ENCODE measurements at regions of chr19 and their contacts with region 1.

Region 1: GRCh38 chr19:49877020-49877878 is at the starts of genes AKT1S1 and TBC1D17:
- DNase-seq: peak; percentile 99
- ATAC-seq: peak; percentile 75
- H3K4me3 Mint-ChIP-seq: no peak within 1 kb of the TSS
- H3K27ac Mint-ChIP-seq: no peak within 1 kb of the TSS
- H3K4me1 Mint-ChIP-seq: peaks cover 25% of the 10 kb centered on the region
- H3K27me3 Mint-ChIP-seq: no peaks in the 10 kb centered on the region
- total RNA-seq, gene AKT1S1: 16.1 to 20.3 TPM
- total RNA-seq, gene TBC1D17: 29.1 to 29.6 TPM

Region 2: DNA sequence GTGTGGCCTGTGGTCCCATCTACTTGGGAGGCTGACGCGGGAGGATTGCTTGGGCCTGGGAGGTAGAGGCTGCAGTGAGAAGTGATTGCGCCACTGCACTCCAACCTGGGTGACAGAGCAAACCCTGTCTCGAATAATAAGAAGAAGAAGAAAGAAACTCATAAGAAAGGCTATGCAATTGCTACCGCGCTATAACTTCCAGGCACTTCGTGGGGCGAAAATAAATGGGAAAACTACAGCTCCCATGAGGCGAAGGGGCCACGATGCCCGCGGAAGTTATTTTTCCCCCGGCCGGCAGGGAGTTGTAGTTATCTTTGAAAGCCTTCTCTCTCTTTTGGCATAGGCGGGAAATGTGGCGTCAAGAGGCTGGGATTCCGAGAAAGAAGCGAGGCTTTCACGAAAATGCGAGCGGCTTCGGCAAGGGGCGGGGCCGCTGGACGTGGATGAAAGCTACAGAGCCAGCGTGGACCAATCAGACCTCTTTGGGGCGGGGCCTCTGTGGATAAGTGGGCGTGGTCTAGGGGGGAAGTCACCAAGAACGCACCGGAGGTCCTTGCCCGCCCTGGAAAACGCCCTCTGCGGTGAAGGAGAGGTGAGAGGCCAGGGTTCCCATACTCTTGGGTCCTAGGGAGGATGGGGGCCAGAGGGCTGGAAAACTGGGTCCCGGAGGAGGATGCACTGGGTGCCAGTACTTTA is 977.3 kb before region 1 on chr19 and contains the start of gene NUCB1:
- CTCF ChIA-PET with region 1: no interaction called
- POLR2A ChIA-PET with region 1: no interaction called
- intact Hi-C with region 1: loop called in 1 of 2 experiments (anchors 5 kb)
- DNase-seq: peak; percentile 100
- ATAC-seq: peak; percentile 95
- H3K4me3 Mint-ChIP-seq: peak within 1 kb of the TSS; percentile 99
- H3K27ac Mint-ChIP-seq: peak within 1 kb of the TSS; percentile 98
- H3K4me1 Mint-ChIP-seq: peaks cover 34% of the 10 kb centered on the region
- H3K27me3 Mint-ChIP-seq: peaks cover 5% of the 10 kb centered on the region
- total RNA-seq, gene NUCB1: 115 to 118 TPM

Region 3: GRCh38 chr19:49590071-49590970 is 286.9 kb before region 1 on chr19:
- CTCF ChIA-PET with region 1: no interaction called
- POLR2A ChIA-PET with region 1: no interaction called
- intact Hi-C with region 1: loop called in 1 of 2 experiments (anchors 1 kb)
- DNase-seq: peak; percentile 98
- ATAC-seq: peak; percentile 80
- H3K4me3 Mint-ChIP-seq: peak overlapping the region; percentile 79
- H3K27ac Mint-ChIP-seq: peak overlapping the region; percentile 84
- H3K4me1 Mint-ChIP-seq: peaks cover 28% of the 10 kb centered on the region
- H3K27me3 Mint-ChIP-seq: no peaks in the 10 kb centered on the region

Region 4: DNA sequence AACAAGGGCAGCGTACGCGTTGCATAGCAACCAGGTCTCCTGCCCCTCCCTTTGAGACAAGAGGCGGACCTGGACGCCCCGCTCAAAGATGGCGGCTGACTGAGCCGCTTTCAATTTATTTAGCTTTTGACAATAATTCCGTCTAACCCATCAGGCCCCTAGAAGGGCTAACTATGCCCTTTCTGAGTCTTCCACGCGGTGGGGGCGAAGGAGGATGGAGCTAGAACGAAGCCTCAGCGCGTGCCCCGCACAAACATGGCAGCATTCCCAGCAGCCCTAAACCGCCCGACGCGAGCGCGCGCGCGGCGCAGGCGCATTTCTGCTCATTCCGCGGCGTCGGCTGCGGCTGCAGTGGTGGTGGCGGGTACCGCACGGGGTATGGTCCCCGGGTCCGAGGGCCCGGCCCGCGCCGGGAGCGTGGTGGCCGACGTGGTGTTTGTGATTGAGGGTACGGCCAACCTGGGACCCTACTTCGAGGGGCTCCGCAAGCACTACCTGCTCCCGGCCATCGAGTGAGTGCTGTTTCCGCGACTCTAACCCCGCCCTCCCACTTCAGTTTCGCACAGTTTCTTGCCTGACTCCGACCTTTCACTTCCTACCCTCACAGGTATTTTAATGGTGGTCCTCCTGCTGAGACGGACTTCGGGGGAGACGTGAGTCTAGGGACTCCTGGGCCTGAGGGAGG is 59.1 kb before region 1 on chr19 and contains the start of gene MED25:
- CTCF ChIA-PET with region 1: no interaction called
- POLR2A ChIA-PET with region 1: no interaction called
- intact Hi-C with region 1: loop called (anchors 1 to 2 kb)
- DNase-seq: peak; percentile 91
- ATAC-seq: peak; percentile 75
- H3K4me3 Mint-ChIP-seq: peak within 1 kb of the TSS; percentile 87
- H3K27ac Mint-ChIP-seq: peak within 1 kb of the TSS; percentile 99
- H3K4me1 Mint-ChIP-seq: peaks cover 26% of the 10 kb centered on the region
- H3K27me3 Mint-ChIP-seq: no peaks in the 10 kb centered on the region
- total RNA-seq, gene MED25: 39.6 to 49.9 TPM

Region 5: DNA sequence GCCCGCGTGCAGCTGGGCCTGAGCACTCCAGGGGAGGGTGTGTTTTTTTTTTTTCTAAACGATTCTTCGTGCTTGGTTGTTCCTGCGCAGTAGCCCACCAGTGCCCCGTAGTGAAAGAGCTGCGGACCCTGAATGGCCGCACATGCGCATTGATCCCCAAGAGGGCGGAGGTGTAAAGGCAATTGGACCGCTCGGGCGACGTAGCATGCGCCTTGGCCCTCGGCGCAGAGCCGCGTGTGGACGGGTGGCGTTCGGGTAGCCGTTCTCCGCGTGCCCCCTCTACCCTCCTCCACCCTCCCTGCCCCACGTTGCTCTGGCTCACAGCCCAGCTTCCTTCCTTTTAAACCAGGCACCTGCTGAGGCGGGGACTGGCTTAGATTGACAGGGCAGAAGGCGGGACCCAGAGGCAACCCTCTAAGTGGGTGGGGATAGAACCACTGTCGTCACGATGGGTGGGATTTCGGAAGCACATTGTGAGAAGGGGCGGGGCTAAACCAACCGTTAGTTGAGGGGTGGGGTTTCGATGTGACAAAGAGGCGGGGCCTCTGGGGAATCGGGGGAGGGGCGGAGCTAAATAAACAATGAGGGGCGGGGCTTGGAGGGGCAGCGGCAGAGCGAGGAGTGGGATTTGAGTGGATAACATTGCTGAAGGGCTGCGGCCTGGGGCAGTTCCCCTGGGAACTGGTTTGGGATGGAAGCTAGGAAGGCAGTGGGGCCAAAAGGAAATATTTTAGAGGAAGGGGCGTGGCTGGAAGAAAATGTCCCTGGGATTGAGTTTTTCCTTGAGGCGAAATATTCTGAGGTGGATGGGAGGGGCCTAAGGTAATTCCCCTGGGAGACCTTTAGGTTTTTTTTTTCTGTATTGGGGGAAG is 52.6 kb after region 1 on chr19:
- CTCF ChIA-PET with region 1: interaction called, 3 read pairs
- POLR2A ChIA-PET with region 1: interaction called, 17 read pairs
- intact Hi-C with region 1: loop called (anchors 1 kb)
- DNase-seq: peak; percentile 97
- ATAC-seq: peak; percentile 91
- H3K4me3 Mint-ChIP-seq: peak overlapping the region; percentile 96
- H3K27ac Mint-ChIP-seq: peak overlapping the region; percentile 98
- H3K4me1 Mint-ChIP-seq: peaks cover 59% of the 10 kb centered on the region
- H3K27me3 Mint-ChIP-seq: no peaks in the 10 kb centered on the region

Region 6: DNA sequence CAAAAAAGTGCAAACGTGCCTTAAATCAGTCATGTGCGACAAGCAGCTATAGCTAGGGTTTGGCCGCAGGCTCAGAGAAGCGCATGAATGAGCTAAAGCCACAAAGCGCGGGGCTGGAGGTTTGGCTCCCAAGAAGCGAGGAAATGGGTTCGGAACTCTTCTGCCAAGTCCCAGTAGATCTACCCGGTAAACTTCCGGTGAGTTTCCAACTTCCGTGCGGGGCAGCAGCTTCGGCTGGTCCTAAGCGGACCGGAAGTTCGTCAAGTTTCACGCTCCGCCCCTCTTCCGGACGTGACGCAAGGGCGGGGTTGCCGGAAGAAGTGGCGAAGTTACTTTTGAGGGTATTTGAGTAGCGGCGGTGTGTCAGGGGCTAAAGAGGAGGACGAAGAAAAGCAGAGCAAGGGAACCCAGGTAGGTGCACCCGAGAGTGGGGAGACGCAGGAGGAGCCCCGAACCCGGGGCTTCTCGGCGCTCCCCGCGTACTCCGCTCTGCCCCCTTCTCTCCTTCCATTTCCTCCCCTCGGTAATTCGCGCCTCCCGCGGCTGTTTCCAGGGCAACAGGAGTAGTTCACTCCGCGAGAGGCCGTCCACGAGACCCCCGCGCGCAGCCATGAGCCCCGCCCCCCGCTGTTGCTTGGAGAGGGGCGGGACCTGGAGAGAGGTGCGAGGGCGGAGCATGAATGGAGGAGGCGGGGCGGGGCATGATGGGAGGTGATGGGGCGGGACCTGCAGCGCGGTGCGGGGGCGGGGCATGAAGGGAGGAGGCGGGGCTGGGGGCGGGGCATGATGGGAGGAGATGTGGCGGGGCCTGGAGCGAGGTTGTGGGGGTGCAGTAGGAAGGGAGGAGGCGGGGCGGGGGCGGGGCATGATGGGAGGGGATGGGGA is 499.2 kb after region 1 on chr19 and contains the start of gene NR1H2:
- CTCF ChIA-PET with region 1: no interaction called
- POLR2A ChIA-PET with region 1: no interaction called
- intact Hi-C with region 1: loop called in 1 of 2 experiments (anchors 1 kb)
- DNase-seq: peak; percentile 97
- ATAC-seq: peak; percentile 89
- H3K4me3 Mint-ChIP-seq: peak within 1 kb of the TSS; percentile 89
- H3K27ac Mint-ChIP-seq: peak within 1 kb of the TSS; percentile 97
- H3K4me1 Mint-ChIP-seq: peaks cover 21% of the 10 kb centered on the region
- H3K27me3 Mint-ChIP-seq: no peaks in the 10 kb centered on the region
- total RNA-seq, gene NR1H2: 50.3 to 53.6 TPM

Measured in activated CD4-positive, alpha-beta T cell treated with anti-CD3 and anti-CD28 coated beads for 36 hours (primary cell).